ENCODE measurements at regions of chr14 and their contacts with region 1.

Region 1: DNA sequence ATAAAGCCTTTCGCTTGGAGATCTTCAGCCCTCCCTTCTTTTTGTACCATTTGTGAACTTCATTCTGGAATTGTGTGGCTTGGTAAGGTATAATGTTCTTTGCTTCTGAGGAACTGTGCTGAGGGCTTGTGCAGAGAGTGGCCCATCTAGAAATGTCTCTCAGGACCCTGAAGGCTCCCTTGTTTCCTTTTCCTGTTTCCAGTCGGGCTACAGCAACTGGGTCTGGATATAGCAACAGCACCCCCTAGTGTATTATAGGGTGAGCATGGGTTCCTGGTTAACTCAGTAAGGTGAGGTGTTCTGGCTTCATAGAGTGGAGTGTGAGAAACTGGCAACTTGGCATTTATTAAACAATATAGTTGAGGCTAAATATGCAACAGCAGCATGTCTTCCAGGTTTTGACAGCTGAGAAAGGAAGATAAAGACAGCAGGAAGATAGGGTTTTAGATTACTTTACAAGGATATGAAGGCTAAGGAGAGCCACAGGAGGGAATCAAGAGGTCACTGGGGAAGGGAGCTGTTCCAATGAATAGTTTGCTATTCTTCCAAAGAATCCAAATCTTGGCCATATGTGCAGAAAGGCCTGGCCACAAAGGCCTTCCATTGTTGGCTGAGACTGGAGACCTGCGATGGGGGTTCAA is 49.1 kb upstream of the RNU6-8 start:
- DNase-seq: no peak
- ATAC-seq: peak; percentile 88
- H3K4me3 Mint-ChIP-seq: no peak overlapping the region
- H3K27ac Mint-ChIP-seq: no peak overlapping the region
- H3K4me1 Mint-ChIP-seq: no peaks in the 10 kb centered on the region
- H3K27me3 Mint-ChIP-seq: no peaks in the 10 kb centered on the region
- CTCF ChIP-seq: peak; percentile 46

Region 2: DNA sequence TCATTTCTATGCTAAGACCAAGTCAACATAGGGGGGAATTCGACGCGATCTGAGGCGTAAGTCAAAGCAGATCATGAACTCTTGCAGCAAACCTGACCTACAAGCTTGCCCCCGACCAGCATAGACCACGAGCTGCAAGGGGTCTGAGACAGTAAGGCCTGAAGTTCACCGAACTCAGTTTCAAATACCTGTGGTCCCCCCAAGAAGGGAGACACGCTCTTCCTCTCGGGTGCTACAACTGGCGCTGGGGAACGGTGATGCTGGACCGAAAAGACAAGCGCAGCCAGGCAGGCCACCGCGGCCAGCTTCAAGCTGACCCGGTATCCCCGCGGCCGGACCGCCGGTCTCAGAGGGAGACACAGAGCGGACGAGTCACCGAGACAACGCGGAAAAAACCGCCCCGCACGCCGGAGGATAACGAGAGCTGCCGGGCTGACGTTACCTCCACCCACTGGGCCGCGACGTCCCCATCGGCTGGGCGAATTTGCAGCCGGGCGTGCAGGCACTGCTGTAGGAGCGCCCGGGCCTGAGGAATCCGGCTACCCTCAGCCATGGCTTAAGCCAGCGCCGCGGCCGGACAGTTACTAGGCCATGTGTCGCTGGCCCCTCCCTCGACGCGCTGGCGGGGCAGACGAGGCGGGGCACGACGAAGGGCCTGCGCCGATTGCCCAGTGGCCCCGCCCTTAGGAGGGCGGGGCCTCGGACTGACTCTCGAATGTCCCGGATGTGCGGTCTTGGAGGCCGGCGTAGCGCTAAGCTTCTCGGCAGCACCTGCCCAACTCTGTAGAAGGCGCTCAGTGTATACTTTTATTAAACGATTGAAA is 795.1 kb before region 1 on chr14 and contains the start of gene DTD2:
- CTCF ChIA-PET with region 1: interaction called, 8 read pairs
- POLR2A ChIA-PET with region 1: interaction called, 3 read pairs
- intact Hi-C with region 1: loop called (anchors 5 kb)
- DNase-seq: peak; percentile 82
- ATAC-seq: peak; percentile 98
- H3K4me3 Mint-ChIP-seq: peak within 1 kb of the TSS; percentile 99
- H3K27ac Mint-ChIP-seq: peak within 1 kb of the TSS; percentile 96
- H3K4me1 Mint-ChIP-seq: peaks cover 31% of the 10 kb centered on the region
- H3K27me3 Mint-ChIP-seq: no peaks in the 10 kb centered on the region
- CTCF ChIP-seq: no peak
- total RNA-seq, gene DTD2: 19.8 and 21.3 TPM in 2 replicates

Region 3: GRCh38 chr14:31545328-31545727 is 706.8 kb before region 1 on chr14:
- CTCF ChIA-PET with region 1: no interaction called
- POLR2A ChIA-PET with region 1: no interaction called
- intact Hi-C with region 1: no loop called
- DNase-seq: no peak
- ATAC-seq: no peak
- H3K4me3 Mint-ChIP-seq: no peak overlapping the region
- H3K27ac Mint-ChIP-seq: no peak overlapping the region
- H3K4me1 Mint-ChIP-seq: no peaks in the 10 kb centered on the region
- H3K27me3 Mint-ChIP-seq: peaks cover 19% of the 10 kb centered on the region
- CTCF ChIP-seq: no peak

Region 4: DNA sequence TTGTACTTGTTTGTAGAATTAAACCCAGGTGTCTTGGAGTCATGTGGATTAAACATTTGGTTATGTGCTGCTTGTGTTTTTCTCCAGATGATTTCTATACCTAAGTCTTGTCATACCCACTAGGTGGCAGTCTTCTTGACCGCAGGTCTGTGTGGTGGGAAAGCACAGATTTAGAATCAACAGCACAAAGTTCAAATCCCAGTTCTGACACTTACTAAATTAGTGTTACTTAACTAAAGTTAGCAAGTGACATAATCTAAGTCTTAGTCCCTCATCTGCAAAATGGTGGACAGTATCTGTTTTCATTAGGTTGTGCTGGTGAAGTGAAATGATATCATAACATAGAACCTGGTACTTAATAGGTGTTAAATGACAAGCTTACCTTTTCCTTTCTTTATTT is 326.0 kb before region 1 on chr14:
- CTCF ChIA-PET with region 1: interaction called, 117 read pairs
- POLR2A ChIA-PET with region 1: no interaction called
- intact Hi-C with region 1: loop called (anchors 1 kb)
- DNase-seq: no peak
- ATAC-seq: peak; percentile 47
- H3K4me3 Mint-ChIP-seq: no peak overlapping the region
- H3K27ac Mint-ChIP-seq: no peak overlapping the region
- H3K4me1 Mint-ChIP-seq: no peaks in the 10 kb centered on the region
- H3K27me3 Mint-ChIP-seq: no peaks in the 10 kb centered on the region
- CTCF ChIP-seq: no peak

Region 5: DNA sequence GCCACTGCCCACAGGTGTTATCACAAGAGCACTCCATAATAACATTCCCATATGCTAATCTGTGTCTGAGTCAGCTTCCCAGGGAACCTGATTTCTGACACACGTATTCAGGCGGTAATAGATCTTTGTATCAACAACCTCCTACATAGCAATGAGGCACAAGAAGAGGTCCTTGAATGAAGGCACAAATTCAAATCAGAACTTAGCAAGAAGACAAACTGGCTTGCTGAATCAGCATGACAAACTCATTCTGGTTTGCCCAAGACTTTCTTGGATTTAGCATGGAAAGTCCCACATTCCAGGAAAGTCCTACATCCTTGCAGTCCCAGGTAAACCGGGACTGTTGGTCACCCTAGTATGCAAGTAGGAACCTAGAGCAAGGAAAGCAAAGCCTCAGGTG is 84.2 kb before region 1 on chr14:
- CTCF ChIA-PET with region 1: no interaction called
- POLR2A ChIA-PET with region 1: no interaction called
- intact Hi-C with region 1: loop called (anchors 5 kb)
- DNase-seq: no peak
- ATAC-seq: no peak
- H3K4me3 Mint-ChIP-seq: no peak overlapping the region
- H3K27ac Mint-ChIP-seq: no peak overlapping the region
- H3K4me1 Mint-ChIP-seq: peaks cover 15% of the 10 kb centered on the region
- H3K27me3 Mint-ChIP-seq: no peaks in the 10 kb centered on the region
- CTCF ChIP-seq: no peak

Measured in activated B cell treated with CpG ODN at 0.5 μM for 24 hours (primary cell).